ENCODE measurements at regions of chr4 and their contacts with region 1.

Region 1: GRCh38 chr4:139761461-139761860 is 95.8 kb downstream of the MGST2 start:
- DNase-seq: peak; percentile 82
- ATAC-seq: peak; percentile 99
- H3K4me3 ChIP-seq: no peak overlapping the region
- H3K27ac ChIP-seq: no peak overlapping the region
- H3K4me1 ChIP-seq: peaks cover 33% of the 10 kb centered on the region
- H3K27me3 ChIP-seq: peaks cover 0 to 4% of the 10 kb centered on the region in 2 experiments; a peak in 2 of 5 replicates
- CTCF ChIP-seq: peak; percentile 72
- EP300 ChIP-seq: no peak
- POLR2A ChIP-seq: no peak
- RAD21 ChIP-seq: peak; percentile 43; the same call in 1 of the 2 replicates

Region 2: GRCh38 chr4:139740531-139741041 is 20.9 kb before region 1 on chr4:
- CTCF ChIA-PET with region 1: no interaction called
- POLR2A ChIA-PET with region 1: no interaction called
- in situ Hi-C with region 1: no loop called
- intact Hi-C with region 1: loop called (anchors 1 kb)
- DNase-seq: peak; percentile 83
- ATAC-seq: peak; percentile 48
- H3K4me3 ChIP-seq: no peak overlapping the region
- H3K27ac ChIP-seq: peak overlapping the region; percentile 73
- H3K4me1 ChIP-seq: peaks cover 42% of the 10 kb centered on the region
- H3K27me3 ChIP-seq: no peaks in the 10 kb centered on the region
- CTCF ChIP-seq: peak; percentile 60
- EP300 ChIP-seq: no peak; a peak in 1 of 4 replicates
- POLR2A ChIP-seq: no peak
- RAD21 ChIP-seq: no peak